ENCODE measurements at regions of chr13 and their contacts with region 1.

Region 1: DNA sequence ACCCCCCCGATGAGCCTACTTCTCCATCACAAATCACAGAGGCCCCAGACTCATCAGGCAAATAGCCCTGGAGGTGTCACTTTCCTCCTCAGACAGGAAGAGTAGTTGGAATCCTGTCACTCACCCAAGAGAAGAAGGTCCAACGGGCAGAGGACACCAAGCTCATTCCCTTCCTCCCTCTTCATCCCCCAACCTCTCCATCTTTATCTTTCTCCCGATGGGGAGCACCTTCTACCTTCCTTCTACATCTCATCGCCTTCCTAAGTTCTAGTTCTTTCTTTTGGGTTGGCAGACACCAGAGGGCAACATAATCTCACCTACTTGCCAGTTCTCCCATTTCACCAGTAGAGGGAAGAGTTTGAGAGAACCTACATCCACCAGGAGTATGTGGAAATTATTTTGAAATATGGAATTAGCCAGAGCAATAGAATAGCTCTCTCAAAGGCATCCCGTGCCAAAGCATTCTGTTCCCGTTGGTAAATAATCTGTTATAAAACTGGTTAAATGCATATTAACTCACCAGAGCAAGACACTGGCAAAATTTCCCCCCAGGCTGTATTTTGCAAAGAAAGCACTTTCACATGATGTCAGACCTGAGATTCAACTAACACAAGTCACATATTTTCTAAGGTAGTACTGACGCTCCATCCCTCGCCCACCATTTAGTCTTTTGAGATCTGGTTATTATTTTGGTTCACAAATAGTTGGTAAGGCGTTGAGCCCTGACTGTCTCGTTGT is 55.0 kb downstream of the ZIC5 start:
- DNase-seq: peak in 3 of 7 donors; percentile 13 to 27 (median 20)
- H3K4me3 ChIP-seq: no peak overlapping the region
- H3K27ac ChIP-seq: no peak overlapping the region
- H3K4me1 ChIP-seq: no peaks in the 10 kb centered on the region
- H3K27me3 ChIP-seq: peaks cover 16% of the 10 kb centered on the region
- CTCF ChIP-seq: peak; percentile 69 to 98 (median 86)
- POLR2A ChIP-seq: no peak

Region 2: DNA sequence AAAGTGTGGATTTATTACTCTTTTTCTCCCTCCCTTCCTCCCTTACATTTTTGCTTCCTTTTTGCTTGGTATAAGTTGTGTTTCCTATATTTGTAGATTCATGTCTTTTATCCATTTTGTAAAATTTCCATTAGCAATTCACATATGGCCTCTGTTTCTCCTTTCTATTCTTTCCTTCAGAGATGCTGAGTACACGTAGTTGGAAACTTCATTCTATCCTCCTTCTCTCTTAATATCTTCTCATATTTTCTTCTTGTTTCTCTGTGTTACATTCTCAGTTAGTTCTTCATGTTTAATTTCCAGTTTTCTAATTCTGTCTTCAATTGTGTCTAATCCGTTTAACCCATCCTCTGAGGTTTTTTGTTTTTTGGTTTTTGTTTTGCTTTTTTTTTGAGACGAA is 133.9 kb before region 1 on chr13:
- intact Hi-C with region 1: no loop called
- DNase-seq: no peak
- H3K4me3 ChIP-seq: no peak overlapping the region
- H3K27ac ChIP-seq: no peak overlapping the region
- H3K4me1 ChIP-seq: no peaks in the 10 kb centered on the region
- H3K27me3 ChIP-seq: no peaks in the 10 kb centered on the region
- CTCF ChIP-seq: no peak
- POLR2A ChIP-seq: no peak

Region 3: DNA sequence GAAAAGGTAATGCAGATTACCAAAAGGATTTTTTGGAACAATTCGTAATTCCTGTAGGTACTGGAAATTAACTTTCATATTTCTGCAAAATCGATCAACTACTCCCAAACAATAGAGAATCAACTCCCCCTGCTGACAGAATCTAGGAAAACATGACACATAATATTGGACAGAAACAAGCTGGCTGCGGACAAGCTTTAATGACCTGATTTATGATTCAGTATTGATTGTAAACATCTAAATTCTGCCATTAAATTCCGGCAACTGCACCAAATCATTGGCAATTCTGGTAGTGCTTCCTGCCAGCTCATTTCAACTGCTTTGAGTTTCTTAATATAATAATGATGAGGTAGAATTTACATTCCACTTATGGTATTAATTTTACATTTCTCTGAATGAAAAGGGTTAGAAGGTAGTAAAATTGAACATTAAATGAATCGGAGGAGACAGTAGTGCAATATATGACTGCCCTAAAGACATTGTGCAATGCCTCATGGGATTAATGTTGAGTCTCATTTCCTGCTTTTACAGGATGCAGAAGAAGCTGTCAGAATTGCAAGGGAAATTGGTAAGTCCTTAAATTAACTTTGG is 318.9 kb after region 1 on chr13:
- intact Hi-C with region 1: loop called in 1 of 2 experiments (anchors 5 kb)
- DNase-seq: peak in 3 of 7 donors; percentile 16 to 35 (median 18)
- H3K4me3 ChIP-seq: no peak overlapping the region
- H3K27ac ChIP-seq: no peak overlapping the region
- H3K4me1 ChIP-seq: peaks cover 0 to 14% of the 10 kb centered on the region in 2 donors
- H3K27me3 ChIP-seq: no peaks in the 10 kb centered on the region
- CTCF ChIP-seq: peak; percentile 40 to 91 (median 64)
- POLR2A ChIP-seq: no peak